ENCODE measurements at regions of chr9 and their contacts with region 1.

Region 1: DNA sequence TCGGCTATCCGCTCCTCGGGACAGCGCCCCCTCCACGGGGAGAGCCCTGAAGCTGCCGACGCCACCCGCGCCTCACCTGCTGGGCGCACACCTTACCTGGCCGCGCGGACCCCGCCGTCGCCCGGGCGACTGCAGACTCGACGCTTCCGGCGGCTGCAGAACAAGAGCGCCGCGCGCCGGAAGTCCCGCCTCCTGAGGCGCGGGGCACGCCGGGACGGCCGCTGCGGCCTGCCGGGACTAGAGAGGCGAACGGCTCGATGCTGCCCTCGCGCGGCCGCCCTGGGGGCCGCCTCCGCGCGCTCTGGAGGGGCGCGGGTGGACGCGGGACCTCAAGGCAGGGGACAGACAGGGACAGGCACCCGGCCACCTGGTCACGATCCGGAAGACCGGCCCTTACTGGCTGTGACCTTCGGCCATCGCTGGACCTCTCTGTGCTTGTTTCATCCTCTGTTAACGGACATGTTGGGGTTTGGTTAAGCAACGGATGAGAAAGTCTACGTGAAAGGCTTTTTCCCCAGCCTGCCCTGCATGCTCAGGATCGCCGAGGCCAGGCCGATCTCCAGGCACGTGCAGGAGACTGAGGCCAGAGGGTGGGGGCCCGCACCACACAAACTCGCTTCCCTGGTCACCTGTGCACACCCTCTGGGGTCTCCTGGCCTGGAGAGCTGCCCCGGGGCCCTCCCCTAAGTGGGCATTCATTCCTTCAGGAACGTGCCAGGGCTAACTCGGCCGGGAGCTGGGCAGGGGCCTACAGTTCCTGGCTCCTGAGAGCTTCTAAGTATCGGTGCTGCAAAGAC is at the start of gene SNAPC4:
- DNase-seq: peak; percentile 50 to 93 (median 85)

Region 2: DNA sequence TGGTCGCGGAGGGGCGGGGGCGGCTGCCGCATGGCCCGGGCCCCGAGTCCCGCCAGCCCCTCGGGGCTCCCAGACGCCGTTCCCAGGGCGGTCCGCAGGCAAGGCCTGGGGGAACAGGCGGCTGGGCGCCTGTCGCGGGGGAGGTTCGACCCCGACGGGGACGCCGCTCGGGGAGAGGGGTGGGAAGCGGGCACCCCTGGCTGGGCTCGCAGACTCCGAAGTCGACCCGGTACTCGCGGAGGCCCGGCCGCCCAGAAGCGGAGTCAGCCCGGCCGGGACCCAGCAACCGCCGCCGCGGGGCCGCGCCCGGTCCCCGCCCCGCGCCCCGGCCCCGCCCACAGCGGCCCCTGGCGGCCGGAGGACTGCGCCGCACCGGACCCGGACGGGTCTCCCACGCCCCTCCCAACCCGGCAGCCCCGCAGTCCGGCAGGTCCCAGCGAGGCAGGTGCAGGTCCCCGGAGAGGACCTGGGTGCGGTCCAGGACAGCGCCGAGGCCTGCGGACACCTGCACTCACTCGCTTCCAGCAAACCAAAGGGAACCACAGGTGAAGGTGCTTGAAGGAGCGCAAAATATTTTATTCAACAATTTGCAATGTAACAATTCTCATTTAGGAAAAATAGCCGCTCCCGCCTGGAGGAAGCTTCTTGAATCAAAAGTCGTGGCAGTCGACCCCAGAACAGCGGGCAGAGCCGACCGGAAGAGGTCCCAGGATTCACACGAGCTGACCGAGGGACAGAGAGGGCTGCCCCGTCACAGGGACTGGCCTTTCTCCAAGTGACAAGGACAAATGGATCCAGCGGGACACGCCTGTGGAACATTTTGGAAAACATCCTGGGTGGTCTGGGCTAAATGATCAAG is 39.5 kb after region 1 on chr9 and contains the start of gene INPP5E:
- intact Hi-C with region 1: loop called (anchors 5 kb)
- DNase-seq: peak in 41 of 42 donors; percentile 13 to 90 (median 76)

Measured in head of caudate nucleus (tissue), 42 donors.